ENCODE measurements at regions of chr4 and their contacts with region 1.

Region 1: DNA sequence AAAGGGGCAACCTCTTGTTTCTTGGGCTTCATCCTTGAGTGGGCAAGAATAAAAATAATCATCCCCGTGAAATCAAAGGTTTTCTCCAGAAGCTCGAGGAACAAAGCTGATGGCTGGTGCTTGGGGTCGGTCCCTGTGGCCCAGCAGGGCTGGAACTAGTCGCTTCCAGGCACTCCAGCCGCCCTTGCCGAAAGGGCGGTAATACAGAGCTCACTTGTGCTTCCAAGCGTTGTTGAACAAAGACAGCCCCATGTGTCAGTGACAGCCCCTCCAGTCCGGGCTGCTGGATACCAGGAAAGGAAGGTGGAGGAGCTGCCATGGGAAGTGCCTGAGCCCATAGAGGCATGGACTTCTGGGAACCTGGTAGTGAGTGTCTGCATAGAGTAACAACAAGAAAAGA is 5.2 kb downstream of the HELT start:
- DNase-seq: no peak
- H3K4me3 ChIP-seq: no peak overlapping the region
- H3K27ac ChIP-seq: no peak overlapping the region
- H3K4me1 ChIP-seq: peaks cover 0 to 31% (median 15%) of the 10 kb centered on the region in 4 experiments
- H3K27me3 ChIP-seq: peaks cover 10 to 77% (median 55%) of the 10 kb centered on the region in 5 experiments

Region 2: DNA sequence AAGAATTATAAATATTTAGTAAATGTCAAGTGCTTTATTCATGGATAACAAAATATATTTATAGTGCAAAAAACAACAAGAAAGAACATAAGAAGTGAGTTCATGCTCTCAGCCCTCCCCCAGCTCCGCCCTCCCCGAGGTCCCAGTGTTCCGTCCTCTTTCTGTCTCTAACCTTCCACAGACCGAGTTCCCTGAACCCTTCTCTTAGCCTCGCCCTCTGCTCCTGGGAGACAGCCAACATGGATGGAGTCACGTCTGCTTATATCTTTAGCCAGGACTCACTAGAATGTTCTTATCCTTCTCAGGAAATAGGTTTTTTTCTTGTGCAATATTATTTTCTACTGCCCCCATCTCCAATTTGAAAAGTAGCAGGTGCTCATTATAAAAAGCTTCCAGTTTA is 45.3 kb before region 1 on chr4:
- CTCF ChIA-PET with region 1: no interaction called
- POLR2A ChIA-PET with region 1: no interaction called
- DNase-seq: no peak
- H3K4me3 ChIP-seq: no peak overlapping the region
- H3K27ac ChIP-seq: no peak overlapping the region
- H3K4me1 ChIP-seq: peaks cover 0 to 3% (median under 1%) of the 10 kb centered on the region in 4 experiments
- H3K27me3 ChIP-seq: peaks cover 0 to under 1% (median 0%) of the 10 kb centered on the region in 5 experiments

Region 3: GRCh38 chr4:185005216-185005819 is 18.2 kb before region 1 on chr4:
- CTCF ChIA-PET with region 1: interaction called, 10 read pairs
- POLR2A ChIA-PET with region 1: no interaction called
- DNase-seq: peak; percentile 76 to 89 (median 83)
- H3K4me3 ChIP-seq: peak overlapping the region in 4 of 7 experiments; percentile 17 to 59 (median 54)
- H3K27ac ChIP-seq: no peak overlapping the region
- H3K4me1 ChIP-seq: peaks cover 0 to 8% (median 3%) of the 10 kb centered on the region in 4 experiments
- H3K27me3 ChIP-seq: peaks cover 0 to 23% (median 13%) of the 10 kb centered on the region in 5 experiments

Region 4: GRCh38 chr4:185033950-185034349 is 10.5 kb after region 1 on chr4:
- CTCF ChIA-PET with region 1: interaction called, 10 read pairs
- POLR2A ChIA-PET with region 1: no interaction called
- DNase-seq: no peak
- H3K4me3 ChIP-seq: no peak overlapping the region
- H3K27ac ChIP-seq: no peak overlapping the region
- H3K4me1 ChIP-seq: no peaks in the 10 kb centered on the region
- H3K27me3 ChIP-seq: peaks cover 3 to 34% (median 13%) of the 10 kb centered on the region in 5 experiments